ENCODE measurements at regions of chr16 and their contacts with region 1.

Region 1: GRCh38 chr16:13453938-13454553 is 465.9 kb upstream of the ERCC4 start:
- DNase-seq: peak; percentile 20
- CTCF ChIP-seq: peak; percentile 47

Region 2: DNA sequence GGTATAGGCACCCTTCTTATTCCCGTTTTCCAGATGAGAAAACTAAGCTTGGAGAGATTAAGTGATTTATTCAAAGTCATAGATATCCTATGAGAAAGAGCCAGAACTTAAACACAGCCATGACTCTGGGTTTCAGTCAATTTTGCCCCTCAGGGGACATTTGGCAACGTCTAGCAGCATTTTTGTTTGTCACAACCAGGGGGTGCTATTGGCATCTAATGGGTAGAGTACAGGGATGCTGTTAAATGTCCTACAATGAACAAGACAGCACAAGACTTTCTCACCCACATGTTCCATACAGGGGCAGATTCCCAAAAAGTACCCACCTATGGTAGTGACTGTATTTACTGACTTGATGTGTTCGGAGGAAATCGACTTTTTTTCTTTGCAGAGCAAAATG is 557.5 kb before region 1 on chr16:
- CTCF ChIA-PET with region 1: interaction called, 16 read pairs
- POLR2A ChIA-PET with region 1: no interaction called
- DNase-seq: no peak
- CTCF ChIP-seq: peak; percentile 41

Region 3: DNA sequence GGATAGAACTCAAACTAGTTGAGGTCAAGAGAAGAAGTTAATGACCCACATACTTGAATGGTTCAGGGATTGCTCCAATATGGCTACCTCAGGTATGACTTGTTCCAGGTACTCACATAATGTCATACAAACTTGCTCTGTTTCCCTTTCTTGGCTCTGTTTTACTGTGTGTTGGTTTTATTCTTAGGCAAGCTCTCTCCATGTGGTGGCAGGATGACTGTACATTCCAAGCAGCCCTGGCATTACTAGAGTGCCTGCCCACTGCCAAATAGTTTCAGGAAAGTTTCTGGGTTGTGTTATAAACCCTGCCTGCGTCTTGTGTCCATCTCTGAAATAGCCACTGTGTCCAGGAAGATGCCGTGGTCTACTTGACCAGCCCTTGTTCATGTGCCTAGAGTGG is 75.9 kb before region 1 on chr16:
- CTCF ChIA-PET with region 1: interaction called, 11 read pairs
- POLR2A ChIA-PET with region 1: no interaction called
- DNase-seq: no peak
- CTCF ChIP-seq: no peak

Region 4: DNA sequence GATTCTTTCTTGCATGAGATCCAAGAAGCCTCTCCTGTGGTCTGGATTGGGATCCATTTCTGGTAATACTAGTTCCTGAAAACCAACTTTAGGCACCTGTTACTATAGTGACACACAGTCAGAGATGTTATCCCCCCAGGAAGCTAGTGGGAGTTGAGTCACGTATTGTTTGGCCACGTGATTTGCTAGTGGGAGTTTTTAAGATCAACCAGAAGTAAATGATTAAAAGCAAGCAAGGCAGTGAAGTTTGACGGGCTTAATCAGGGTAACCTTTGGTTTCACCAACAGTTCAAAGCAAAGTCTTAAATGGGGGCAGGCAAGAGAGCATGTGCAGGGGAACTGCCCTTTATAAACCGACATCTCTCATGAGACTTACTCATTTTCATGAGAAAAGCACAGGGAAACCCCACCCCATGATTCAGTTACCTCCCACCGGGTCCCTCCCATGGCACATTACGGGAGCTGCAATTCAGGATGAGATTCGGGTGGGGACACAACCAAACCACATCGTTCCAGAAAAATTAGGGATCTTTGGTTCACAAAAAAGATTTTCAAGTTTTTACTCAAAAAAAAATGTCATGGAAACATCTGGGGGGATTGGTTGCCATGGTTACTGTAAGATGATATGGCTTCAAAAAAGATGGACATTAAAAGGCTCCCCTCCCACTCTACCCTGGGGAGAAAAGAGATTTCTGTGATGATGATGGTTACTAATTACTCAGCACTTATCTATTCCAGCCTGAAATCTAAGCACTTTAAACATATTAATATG is 17.2 kb before region 1 on chr16:
- CTCF ChIA-PET with region 1: interaction called, 15 read pairs
- POLR2A ChIA-PET with region 1: no interaction called
- DNase-seq: peak; percentile 42
- CTCF ChIP-seq: no peak

Region 5: DNA sequence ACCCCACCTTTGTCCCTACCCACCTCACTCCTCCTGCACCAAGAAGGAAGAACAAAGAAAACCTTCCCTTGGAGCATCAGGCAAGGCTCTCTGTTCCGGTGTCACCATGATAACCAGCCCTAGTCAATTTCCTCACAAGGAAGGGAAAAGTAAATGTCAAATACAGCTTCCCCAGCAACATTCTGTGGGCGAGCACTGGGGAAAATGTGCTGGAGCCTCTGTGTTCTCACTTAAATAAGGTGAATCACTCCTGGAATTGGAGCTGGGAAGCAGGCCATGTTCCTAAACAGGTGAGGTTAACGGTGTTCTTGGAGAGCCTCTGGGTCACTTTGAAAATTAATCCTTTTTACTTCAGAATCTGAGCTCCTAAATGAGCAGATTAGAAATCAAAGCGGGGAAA is 38.0 kb after region 1 on chr16:
- CTCF ChIA-PET with region 1: no interaction called
- POLR2A ChIA-PET with region 1: no interaction called
- DNase-seq: no peak
- CTCF ChIP-seq: no peak